ENCODE measurements at regions of chr7 and their contacts with region 1.

Region 1: DNA sequence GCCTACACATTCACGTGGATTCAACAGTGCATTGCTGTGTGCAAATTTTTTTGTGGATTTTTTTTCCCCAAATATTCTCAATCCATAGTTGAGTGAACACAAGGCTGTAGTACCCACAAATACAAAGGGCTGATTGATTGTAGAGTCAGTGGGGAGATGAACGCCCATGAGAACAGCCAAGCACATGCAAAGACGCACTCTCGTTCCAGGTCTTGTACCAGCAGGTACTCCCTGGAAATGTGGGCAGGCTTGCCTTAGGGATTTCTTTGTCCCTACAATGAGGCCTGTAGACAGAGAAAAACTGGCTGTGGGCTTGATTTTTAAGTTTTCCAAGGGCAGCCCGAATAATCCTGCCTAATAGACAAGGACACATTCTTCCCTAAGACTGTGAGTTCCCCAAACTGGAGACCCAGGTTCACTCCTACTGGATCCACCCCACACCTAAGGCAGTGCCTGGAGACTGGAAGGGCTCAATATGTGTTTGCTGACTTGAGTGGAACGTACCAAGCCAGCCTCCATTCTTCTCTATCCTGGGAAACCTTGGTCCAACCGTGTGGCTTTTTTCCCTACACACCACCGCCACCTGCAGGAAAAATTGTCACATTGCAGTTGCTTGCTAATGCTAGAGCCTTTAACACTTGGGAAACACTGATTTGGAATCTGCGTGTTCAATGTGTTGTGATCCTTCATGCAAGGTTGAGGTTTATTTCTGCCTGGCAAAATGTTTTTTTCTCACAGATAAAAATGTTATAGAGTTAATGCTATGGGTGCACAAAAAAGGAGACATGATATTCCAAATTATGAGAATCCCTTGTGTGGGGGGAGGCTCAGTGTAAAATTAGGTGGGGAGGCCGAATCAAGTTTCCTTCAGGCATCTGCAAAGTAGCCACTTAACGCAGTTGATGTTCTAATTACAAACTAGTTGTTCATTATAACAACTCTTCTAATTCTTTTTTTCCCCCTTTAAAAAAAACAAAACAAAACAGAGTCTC is 49.3 kb downstream of the PPP1R17 start:
- DNase-seq: peak; percentile 67
- H3K4me3 Mint-ChIP-seq: no peak overlapping the region
- H3K27ac Mint-ChIP-seq: no peak overlapping the region
- H3K4me1 Mint-ChIP-seq: no peaks in the 10 kb centered on the region
- H3K27me3 Mint-ChIP-seq: no peaks in the 10 kb centered on the region

Region 2: GRCh38 chr7:31134246-31135188 is 601.8 kb before region 1 on chr7:
- intact Hi-C with region 1: loop called (anchors 10 kb)
- DNase-seq: peak; percentile 83
- H3K4me3 Mint-ChIP-seq: no peak overlapping the region
- H3K27ac Mint-ChIP-seq: no peak overlapping the region
- H3K4me1 Mint-ChIP-seq: no peaks in the 10 kb centered on the region
- H3K27me3 Mint-ChIP-seq: no peaks in the 10 kb centered on the region

Region 3: GRCh38 chr7:31563522-31563921 is 172.8 kb before region 1 on chr7:
- intact Hi-C with region 1: no loop called
- DNase-seq: no peak
- H3K4me3 Mint-ChIP-seq: no peak overlapping the region
- H3K27ac Mint-ChIP-seq: no peak overlapping the region
- H3K4me1 Mint-ChIP-seq: no peaks in the 10 kb centered on the region
- H3K27me3 Mint-ChIP-seq: no peaks in the 10 kb centered on the region

Region 4: DNA sequence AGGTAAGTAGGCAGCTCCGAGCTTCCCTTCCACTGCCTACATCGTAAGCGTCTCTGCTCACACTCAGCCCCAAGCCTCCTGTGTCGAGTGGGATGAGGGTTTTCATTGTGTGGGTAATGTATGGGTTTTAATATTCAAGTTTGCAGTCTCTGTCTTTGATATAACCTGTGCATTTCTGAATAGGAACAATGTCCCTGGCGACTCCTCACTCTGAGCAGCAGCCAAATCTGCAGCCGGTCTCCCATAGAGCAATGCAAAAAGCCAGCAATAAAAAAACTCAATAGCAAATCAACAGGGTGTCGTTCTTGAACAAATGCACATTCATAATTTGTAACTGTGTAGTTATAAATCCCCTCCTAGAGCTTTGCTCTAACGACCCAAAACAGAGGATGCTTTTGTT is 15.9 kb before region 1 on chr7:
- intact Hi-C with region 1: no loop called
- DNase-seq: no peak
- H3K4me3 Mint-ChIP-seq: no peak overlapping the region
- H3K27ac Mint-ChIP-seq: no peak overlapping the region
- H3K4me1 Mint-ChIP-seq: no peaks in the 10 kb centered on the region
- H3K27me3 Mint-ChIP-seq: no peaks in the 10 kb centered on the region

Region 5: GRCh38 chr7:31758755-31759154 is 22.5 kb after region 1 on chr7:
- intact Hi-C with region 1: no loop called
- DNase-seq: no peak
- H3K4me3 Mint-ChIP-seq: no peak overlapping the region
- H3K27ac Mint-ChIP-seq: no peak overlapping the region
- H3K4me1 Mint-ChIP-seq: no peaks in the 10 kb centered on the region
- H3K27me3 Mint-ChIP-seq: no peaks in the 10 kb centered on the region

Region 6: GRCh38 chr7:32062150-32062549 is 325.9 kb after region 1 on chr7:
- intact Hi-C with region 1: no loop called
- DNase-seq: peak; percentile 56
- H3K4me3 Mint-ChIP-seq: no peak overlapping the region
- H3K27ac Mint-ChIP-seq: no peak overlapping the region
- H3K4me1 Mint-ChIP-seq: no peaks in the 10 kb centered on the region
- H3K27me3 Mint-ChIP-seq: no peaks in the 10 kb centered on the region